Ascending aorta (tissue), 2 donors: ENCODE measurements at regions of chrX and their contacts with region 1.

Region 1: GRCh38 chrX:64205735-64206491 is 405 bp upstream of the AMER1 start:
- DNase-seq: peak; percentile 85 to 96
- H3K4me3 ChIP-seq: peak overlapping the region; percentile 65 to 90
- H3K27ac ChIP-seq: peak overlapping the region; percentile 87 to 90
- H3K4me1 ChIP-seq: peaks cover 0 to 7% of the 10 kb centered on the region in 2 donors
- H3K27me3 ChIP-seq: no peaks in the 10 kb centered on the region
- CTCF ChIP-seq: peak; percentile 8 to 33 (median 14)

Region 2: GRCh38 chrX:63560601-63561218 is 645.2 kb before region 1 on chrX:
- intact Hi-C with region 1: loop called (anchors 5 kb)
- DNase-seq: peak in 1 of 2 donors; percentile 72
- H3K4me3 ChIP-seq: peak overlapping the region; percentile 61 to 78
- H3K27ac ChIP-seq: peak overlapping the region; percentile 57 to 73
- H3K4me1 ChIP-seq: no peaks in the 10 kb centered on the region
- H3K27me3 ChIP-seq: no peaks in the 10 kb centered on the region
- CTCF ChIP-seq: no peak

Region 3: GRCh38 chrX:63918611-63919010 is 287.3 kb before region 1 on chrX:
- intact Hi-C with region 1: loop called (anchors 5 kb)
- DNase-seq: peak in 1 of 2 donors; percentile 66
- H3K4me3 ChIP-seq: no peak overlapping the region
- H3K27ac ChIP-seq: peak overlapping the region in 1 of 2 donors; percentile 82
- H3K4me1 ChIP-seq: peaks cover 13 to 18% of the 10 kb centered on the region in 2 donors
- H3K27me3 ChIP-seq: no peaks in the 10 kb centered on the region
- CTCF ChIP-seq: peak in 2 of 3 experiments; percentile 13 to 45

Region 4: DNA sequence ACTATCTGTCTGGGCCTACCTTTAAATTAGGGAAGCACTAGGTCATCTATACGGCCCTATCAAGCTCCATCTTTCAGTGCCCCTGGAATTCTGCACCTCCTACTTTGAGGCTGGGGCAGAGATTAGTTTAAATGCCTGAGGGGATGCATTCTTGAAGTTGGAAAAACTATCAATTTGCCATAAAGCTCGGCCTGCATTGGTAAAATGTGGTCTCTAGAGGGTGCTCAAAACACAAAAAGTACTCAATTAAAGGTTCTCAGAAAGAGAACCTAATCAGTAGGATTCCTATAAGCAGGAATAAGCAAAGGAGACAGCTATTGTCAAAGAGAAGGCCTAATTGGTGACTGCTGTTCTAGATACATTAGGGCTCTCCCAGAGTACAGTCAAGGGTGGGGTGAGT is 112.2 kb before region 1 on chrX:
- intact Hi-C with region 1: no loop called
- DNase-seq: no peak
- H3K4me3 ChIP-seq: no peak overlapping the region
- H3K27ac ChIP-seq: no peak overlapping the region
- H3K4me1 ChIP-seq: no peaks in the 10 kb centered on the region
- H3K27me3 ChIP-seq: no peaks in the 10 kb centered on the region
- CTCF ChIP-seq: peak in 1 of 3 experiments; percentile 44

Region 5: GRCh38 chrX:64229145-64229544 is 23.2 kb after region 1 on chrX:
- intact Hi-C with region 1: no loop called
- DNase-seq: no peak
- H3K4me3 ChIP-seq: no peak overlapping the region
- H3K27ac ChIP-seq: no peak overlapping the region
- H3K4me1 ChIP-seq: no peaks in the 10 kb centered on the region
- H3K27me3 ChIP-seq: no peaks in the 10 kb centered on the region
- CTCF ChIP-seq: no peak

Region 6: DNA sequence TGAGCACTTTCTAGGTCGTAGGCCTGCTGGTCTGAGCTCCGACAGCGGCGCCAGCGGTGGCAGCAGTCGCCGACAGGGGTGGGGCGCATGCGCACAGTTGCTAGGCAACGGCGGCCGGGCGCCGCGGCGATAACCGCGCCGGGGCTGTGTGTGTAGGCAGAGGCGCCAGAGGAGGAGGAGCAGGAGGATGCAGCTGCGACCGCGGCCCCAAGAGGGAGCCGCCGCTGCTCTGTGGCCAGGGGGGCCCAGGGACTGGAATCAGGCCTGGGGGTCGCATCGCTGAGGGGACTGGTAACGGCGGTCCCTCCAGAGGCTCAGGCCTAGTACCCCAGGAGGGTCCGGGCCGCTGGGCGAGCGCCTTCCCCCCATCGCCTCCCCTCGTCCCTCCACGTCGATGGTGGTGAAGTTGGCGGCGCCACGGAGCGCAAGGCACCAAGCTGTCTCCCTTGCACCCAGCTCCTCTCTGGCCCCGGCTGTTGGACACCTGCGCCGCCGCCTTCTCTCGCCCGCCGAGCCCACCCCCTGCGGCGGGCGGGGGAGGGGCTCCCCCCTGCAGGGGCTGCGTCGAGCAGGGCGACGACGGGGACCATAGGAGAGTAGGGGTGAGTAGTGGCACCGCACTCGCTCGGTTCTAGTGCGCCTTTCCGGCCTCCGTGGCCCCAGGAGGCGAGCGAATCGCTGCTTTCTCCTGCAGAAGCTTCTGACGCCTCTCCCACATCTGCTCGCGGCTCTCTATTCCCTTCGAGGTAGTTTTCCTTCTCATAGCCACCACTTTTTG is 828.9 kb after region 1 on chrX:
- intact Hi-C with region 1: loop called (anchors 10 kb)
- DNase-seq: peak; percentile 15 to 85
- H3K4me3 ChIP-seq: peak within 1 kb of the TSS; percentile 55 to 71
- H3K27ac ChIP-seq: peak within 1 kb of the TSS; percentile 83 to 85
- H3K4me1 ChIP-seq: no peaks in the 10 kb centered on the region
- H3K27me3 ChIP-seq: no peaks in the 10 kb centered on the region
- CTCF ChIP-seq: peak; percentile 35 to 53 (median 39)